ENCODE measurements at regions of chr13 and their contacts with region 1.

Region 1: GRCh38 chr13:113458253-113459065 is 5.2 kb upstream of the ADPRHL1 start:
- DNase-seq: no peak

Region 2: DNA sequence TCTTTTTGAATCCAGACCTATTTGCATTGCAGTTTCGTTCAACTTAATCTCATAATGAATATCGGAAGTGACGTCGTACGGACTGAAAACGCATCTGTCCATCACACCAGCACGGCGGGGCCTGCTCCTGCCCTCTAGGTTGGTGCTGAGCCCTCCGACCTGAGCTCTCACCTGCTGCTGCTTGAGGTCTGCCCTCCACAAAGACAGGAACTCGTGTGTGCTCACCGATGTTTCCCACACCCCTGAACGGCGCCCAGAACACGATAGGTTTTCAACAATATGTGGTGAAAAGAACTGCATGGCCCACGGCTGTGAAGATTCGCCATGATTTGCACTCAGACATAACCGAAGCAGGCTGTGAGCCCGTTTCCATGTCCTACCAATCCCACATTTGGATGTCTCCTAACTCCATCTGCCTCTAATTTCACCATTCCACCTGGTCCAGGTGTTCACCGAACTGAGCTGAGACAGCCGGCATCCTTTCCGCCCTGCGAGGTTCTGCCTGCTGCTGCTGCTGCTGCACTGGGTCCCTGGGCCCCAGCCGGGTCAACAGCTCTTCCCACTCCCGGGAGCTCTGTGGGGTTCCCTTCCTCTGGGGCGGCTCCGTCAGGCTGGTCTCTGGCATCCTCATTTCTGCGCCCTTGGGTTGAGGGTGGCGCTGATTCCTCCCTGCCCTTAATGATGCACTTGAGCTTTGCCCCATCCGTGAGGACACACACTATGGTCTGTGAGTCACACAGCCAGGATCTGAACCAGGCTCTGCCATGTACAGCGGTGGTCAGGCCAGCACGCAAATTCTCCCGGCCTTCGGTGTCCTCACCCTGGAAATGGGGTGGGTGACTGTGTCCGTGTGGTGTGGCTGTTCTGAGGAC is 115.4 kb before region 1 on chr13:
- intact Hi-C with region 1: no loop called
- DNase-seq: no peak

Region 3: DNA sequence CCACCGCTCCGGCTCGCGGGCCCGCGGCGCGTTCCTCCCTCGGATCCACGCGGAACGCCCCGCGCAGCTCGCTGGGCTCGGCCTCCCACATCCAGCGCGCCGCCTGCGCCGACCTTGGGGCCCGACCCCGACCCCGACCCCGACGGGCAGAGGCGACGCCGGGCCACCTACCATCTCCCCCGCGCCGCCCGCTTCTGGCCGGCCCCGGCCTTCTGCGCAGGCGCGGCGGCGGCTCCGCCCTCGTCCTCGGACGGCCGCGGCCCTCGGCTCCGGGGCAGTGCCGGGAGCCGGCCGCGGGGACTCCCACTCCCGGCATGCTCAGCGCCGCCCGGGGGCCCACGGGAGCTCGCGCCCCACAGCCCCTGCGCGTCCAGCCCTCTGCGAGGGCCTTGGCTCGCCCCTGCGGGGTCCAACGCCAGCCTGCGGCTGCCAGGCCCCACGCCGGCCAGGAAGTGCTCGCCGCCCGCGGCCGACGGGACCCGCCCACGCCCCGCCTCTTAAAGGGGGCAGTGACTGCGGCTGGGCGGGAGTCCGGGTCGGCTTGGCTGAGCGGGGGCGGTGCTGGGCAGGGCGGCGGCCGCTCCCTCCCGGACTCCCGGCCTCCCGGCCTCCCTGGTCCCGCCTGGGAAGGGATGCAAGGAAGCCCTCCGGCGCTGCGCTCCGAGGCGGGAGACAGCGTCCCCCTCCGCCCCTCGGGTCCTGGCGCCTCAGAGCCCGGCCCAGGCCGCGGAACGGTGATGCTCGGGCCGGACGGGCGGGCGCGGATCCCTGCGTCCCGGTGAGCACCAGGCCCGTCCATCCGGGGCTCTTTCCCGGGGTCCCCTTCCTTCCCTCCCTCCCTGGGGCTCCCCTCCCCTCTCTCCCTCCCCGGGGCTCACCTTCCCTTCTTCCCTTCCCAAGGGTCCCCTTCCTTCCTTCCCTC is 32.3 kb after region 1 on chr13 and contains the start of gene DCUN1D2:
- intact Hi-C with region 1: loop called (anchors 5 kb)
- DNase-seq: peak; percentile 97
- total RNA-seq, gene DCUN1D2: 134 TPM

Region 4: GRCh38 chr13:113528101-113528812 is 69.8 kb after region 1 on chr13:
- intact Hi-C with region 1: no loop called
- DNase-seq: no peak

Region 5: GRCh38 chr13:113545455-113545930 is 87.0 kb after region 1 on chr13:
- intact Hi-C with region 1: loop called (anchors 5 kb)
- DNase-seq: peak; percentile 58

Region 6: DNA sequence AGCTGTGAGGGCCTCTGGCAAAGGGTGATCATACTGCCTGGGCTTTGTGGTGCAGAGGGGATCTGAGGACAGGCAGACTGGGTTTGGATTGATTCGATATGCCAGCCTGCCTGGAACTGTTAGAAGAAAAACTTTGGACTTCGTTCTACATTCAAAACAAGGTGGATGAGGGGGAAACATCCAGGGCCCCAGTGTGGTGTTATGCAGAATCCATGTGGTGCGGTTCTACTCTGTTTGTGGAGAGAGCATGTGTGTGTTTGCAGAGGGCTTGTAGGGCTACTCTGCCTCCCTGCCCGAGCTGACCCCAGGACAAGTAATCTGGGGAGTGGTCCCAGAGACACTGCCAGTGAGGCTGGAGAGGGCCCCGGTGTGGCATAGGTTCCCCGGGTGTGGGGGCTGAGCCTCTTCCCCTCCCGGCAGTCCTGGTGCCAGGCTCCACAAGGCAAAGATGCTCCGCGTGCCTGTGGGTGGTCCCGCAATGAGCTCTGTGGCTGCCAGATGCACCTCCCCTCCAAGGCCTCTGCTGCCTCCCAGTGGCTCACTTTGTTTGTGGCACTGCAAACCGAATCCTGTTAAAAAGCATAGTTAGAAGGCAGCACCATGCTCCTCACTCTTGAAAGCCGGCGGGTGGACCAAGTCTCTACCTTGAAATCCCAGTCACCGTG is 103.8 kb after region 1 on chr13:
- intact Hi-C with region 1: loop called (anchors 2 kb)
- DNase-seq: no peak

Region 7: GRCh38 chr13:113584205-113584869 is 125.9 kb after region 1 on chr13 and contains the start of gene TFDP1:
- intact Hi-C with region 1: no loop called
- DNase-seq: peak; percentile 86
- total RNA-seq, gene TFDP1: 38.8 TPM

Region 8: GRCh38 chr13:113848431-113849260 is 390.2 kb after region 1 on chr13:
- intact Hi-C with region 1: no loop called
- DNase-seq: peak; percentile 68